ENCODE measurements at regions of chr3 and their contacts with region 1.

Region 1: DNA sequence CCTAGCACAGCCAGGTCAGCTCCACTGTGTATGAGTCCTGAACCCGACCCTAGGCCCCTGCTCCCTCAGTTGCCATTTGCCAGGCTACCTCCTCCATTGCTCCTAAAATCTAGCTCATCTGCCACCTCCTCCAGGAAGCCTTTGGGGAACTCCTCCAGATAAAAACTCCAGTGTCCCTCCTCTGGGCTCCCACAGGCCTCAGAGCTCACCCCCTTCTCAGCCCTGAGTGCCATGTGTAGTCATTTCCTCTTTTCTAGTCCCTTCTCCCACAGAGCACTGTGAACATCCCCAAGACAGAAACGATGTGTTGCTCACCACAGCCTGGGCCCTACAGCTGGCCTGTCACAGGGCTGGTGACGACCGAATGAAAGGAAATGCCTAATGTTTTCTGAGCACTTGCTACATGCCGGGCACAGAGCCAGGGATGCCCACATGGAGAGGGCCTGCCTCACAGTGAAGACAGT is 61.0 kb downstream of the IQSEC1 start:
- DNase-seq: peak; percentile 63 to 90 (median 85)
- H3K4me3 ChIP-seq: no peak overlapping the region
- H3K27ac ChIP-seq: peak overlapping the region; percentile 1 to 44
- H3K4me1 ChIP-seq: peaks cover 28 to 99% (median 89%) of the 10 kb centered on the region in 4 experiments
- H3K27me3 ChIP-seq: no peaks in the 10 kb centered on the region

Region 2: GRCh38 chr3:12994607-12995388 is 17.5 kb before region 1 on chr3:
- CTCF ChIA-PET with region 1: interaction called, 55 read pairs
- POLR2A ChIA-PET with region 1: interaction called, 4 read pairs
- DNase-seq: peak; percentile 89 to 92 (median 89)
- H3K4me3 ChIP-seq: peak overlapping the region; percentile 40 to 83 (median 66)
- H3K27ac ChIP-seq: peak overlapping the region in 1 of 2 experiments; percentile 54
- H3K4me1 ChIP-seq: peaks cover 14 to 42% (median 35%) of the 10 kb centered on the region in 4 experiments
- H3K27me3 ChIP-seq: peaks cover 0 to 18% (median 3%) of the 10 kb centered on the region in 5 experiments